Activated CD8-positive, alpha-beta T cell treated with anti-CD3 and anti-CD28 coated beads, Interleukin-2, amount 10 ng/mL, durations not matched to agents 7 days and 5 days (primary cell): ENCODE measurements at regions of chr9 and their contacts with region 1.

Region 1: GRCh38 chr9:98775831-98776441 is 20.4 kb downstream of the ANKS6 start:
- DNase-seq: peak; percentile 64
- ATAC-seq: peak; percentile 51
- H3K4me3 Mint-ChIP-seq: no peak overlapping the region
- H3K27ac Mint-ChIP-seq: peak overlapping the region; percentile 26
- H3K4me1 Mint-ChIP-seq: no peaks in the 10 kb centered on the region
- H3K27me3 Mint-ChIP-seq: no peaks in the 10 kb centered on the region

Region 2: DNA sequence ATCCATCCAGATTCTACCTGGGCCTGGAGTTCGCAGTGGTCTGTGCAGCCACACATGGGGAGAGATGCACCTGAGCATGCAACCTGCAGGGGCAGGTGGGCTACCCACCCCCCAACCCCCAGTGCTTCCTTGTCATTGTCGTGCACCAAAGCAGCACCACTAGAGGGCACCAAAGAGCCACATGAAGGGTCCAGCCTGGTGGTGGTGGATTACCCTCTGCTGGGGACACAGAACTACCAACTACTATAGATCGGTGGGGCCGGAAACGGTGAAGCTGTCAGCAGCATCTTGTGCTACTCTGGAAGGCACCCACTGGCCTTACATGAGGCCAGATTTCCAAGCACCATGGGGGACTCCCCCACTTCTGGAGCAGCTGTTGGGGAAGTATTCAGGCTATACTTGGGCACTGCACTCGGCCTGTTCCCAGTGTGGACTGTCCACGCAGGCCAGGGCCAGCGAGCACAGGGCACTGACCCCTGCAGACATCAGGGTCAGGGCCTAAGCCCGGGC is 460.3 kb before region 1 on chr9:
- CTCF ChIA-PET with region 1: interaction called, 50 read pairs
- POLR2A ChIA-PET with region 1: no interaction called
- DNase-seq: peak; percentile 88
- ATAC-seq: peak; percentile 96
- H3K4me3 Mint-ChIP-seq: no peak overlapping the region
- H3K27ac Mint-ChIP-seq: no peak overlapping the region
- H3K4me1 Mint-ChIP-seq: no peaks in the 10 kb centered on the region
- H3K27me3 Mint-ChIP-seq: no peaks in the 10 kb centered on the region

Region 3: DNA sequence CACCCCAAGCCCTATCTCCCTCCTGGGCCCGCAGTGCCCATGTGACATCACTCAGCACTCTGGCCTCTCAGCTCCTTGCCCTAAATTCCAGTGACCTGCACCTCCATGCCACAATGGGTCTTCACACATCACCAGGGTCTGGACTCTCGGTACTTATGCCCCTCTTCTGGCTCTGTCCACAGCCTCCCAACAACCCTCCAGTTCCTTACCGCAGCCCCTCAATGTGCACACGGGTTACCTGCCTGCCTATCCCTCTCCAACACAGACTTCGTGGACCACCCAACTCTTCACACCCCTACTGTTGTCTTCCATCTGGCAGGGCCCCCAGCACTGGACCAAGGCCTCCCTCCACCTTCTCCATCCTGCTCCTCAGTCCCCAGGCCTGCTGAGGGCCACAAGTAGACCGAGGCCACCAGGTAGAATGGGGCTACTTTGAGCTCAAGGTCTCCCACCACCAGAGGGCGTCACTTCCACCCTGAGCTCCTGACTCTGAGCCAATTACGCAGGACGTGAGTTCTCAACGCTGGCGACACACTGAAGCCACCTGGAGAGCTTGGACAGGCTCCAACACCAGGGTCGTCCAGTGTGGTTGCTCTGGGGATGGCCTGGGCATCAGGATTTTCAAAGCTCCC is 239.3 kb before region 1 on chr9:
- CTCF ChIA-PET with region 1: interaction called, 25 read pairs
- POLR2A ChIA-PET with region 1: no interaction called
- DNase-seq: peak; percentile 45
- ATAC-seq: no peak
- H3K4me3 Mint-ChIP-seq: no peak overlapping the region
- H3K27ac Mint-ChIP-seq: no peak overlapping the region
- H3K4me1 Mint-ChIP-seq: no peaks in the 10 kb centered on the region
- H3K27me3 Mint-ChIP-seq: peaks cover 10% of the 10 kb centered on the region

Region 4: GRCh38 chr9:98726735-98727134 is 49.2 kb before region 1 on chr9:
- CTCF ChIA-PET with region 1: interaction called, 11 read pairs
- POLR2A ChIA-PET with region 1: no interaction called
- DNase-seq: no peak
- ATAC-seq: no peak
- H3K4me3 Mint-ChIP-seq: no peak overlapping the region
- H3K27ac Mint-ChIP-seq: no peak overlapping the region
- H3K4me1 Mint-ChIP-seq: no peaks in the 10 kb centered on the region
- H3K27me3 Mint-ChIP-seq: peaks cover 10% of the 10 kb centered on the region

Region 5: DNA sequence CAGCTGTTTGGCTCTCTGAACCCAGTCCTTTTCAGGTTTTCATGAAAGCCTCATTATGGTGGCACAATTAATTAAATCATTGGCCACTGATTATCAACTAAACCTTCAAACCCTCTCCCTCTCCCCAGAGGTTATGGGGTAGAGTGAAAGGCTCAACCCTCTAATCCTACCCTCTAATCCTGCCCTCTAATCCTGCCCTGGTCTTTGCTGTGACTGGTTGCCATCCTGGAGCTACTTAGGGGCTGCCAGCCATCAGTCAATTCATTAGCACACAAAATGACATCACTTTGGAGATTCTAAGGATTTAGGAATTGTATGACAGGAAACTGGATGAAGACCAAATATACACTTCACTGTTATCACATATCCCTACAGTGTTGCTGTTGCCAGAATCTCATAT is 15.7 kb before region 1 on chr9:
- CTCF ChIA-PET with region 1: interaction called, 31 read pairs
- POLR2A ChIA-PET with region 1: no interaction called
- DNase-seq: no peak
- ATAC-seq: no peak
- H3K4me3 Mint-ChIP-seq: no peak overlapping the region
- H3K27ac Mint-ChIP-seq: no peak overlapping the region
- H3K4me1 Mint-ChIP-seq: no peaks in the 10 kb centered on the region
- H3K27me3 Mint-ChIP-seq: no peaks in the 10 kb centered on the region

Region 6: GRCh38 chr9:98791147-98792095 is 15.5 kb after region 1 on chr9:
- CTCF ChIA-PET with region 1: interaction called, 25 read pairs
- POLR2A ChIA-PET with region 1: no interaction called
- DNase-seq: peak; percentile 68
- ATAC-seq: peak; percentile 77
- H3K4me3 Mint-ChIP-seq: no peak overlapping the region
- H3K27ac Mint-ChIP-seq: no peak overlapping the region
- H3K4me1 Mint-ChIP-seq: peaks cover 19% of the 10 kb centered on the region
- H3K27me3 Mint-ChIP-seq: no peaks in the 10 kb centered on the region

Region 7: DNA sequence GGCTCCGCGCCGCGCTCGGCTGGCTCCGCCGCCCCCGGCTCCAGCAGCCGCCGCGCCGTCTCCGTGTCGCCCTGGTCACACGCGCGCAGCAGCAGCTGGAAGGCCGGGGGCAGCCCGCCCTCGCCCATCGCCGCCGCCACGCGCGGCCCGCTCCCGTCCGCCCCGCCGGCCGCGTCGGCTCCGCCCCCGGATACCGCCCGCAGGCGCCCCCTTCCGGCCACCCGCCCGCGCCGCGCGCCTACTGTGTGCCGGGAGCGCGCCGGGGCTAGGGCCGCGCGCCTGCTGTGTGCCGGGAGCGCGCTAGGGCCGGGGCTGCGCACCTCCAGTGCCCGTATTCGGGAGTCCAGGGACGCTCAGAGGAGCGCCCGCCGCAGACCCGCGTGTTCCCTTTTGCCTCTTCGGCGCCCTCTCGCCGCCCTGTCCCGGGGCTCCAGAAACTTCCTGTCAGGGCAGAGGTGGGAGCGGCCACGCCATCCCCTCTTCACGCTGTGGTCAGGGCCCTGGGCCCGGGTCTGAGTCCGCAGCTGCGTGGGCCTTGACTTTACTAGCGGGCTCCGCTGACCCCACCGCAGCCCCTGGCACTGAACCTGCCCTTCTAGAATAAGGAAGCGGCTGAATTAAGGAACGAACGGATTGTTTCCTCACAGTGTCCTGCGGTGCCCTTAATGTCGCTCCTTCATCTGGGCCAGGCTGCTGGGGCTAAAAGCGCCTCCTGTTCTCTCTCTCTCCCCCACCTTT is 20.6 kb after region 1 on chr9 and contains the start of gene ANKS6:
- CTCF ChIA-PET with region 1: interaction called, 25 read pairs
- POLR2A ChIA-PET with region 1: no interaction called
- DNase-seq: peak; percentile 83
- ATAC-seq: peak; percentile 90
- H3K4me3 Mint-ChIP-seq: peak within 1 kb of the TSS; percentile 79
- H3K27ac Mint-ChIP-seq: peak within 1 kb of the TSS; percentile 48
- H3K4me1 Mint-ChIP-seq: peaks cover 16% of the 10 kb centered on the region
- H3K27me3 Mint-ChIP-seq: peaks cover 8% of the 10 kb centered on the region
- total RNA-seq, gene ANKS6: 3.8 to 5.8 TPM

Region 8: GRCh38 chr9:98833090-98833956 is 57.4 kb after region 1 on chr9:
- CTCF ChIA-PET with region 1: no interaction called
- POLR2A ChIA-PET with region 1: no interaction called
- DNase-seq: no peak
- ATAC-seq: no peak
- H3K4me3 Mint-ChIP-seq: no peak overlapping the region
- H3K27ac Mint-ChIP-seq: no peak overlapping the region
- H3K4me1 Mint-ChIP-seq: no peaks in the 10 kb centered on the region
- H3K27me3 Mint-ChIP-seq: no peaks in the 10 kb centered on the region